Activated T-helper 1 cell treated with anti-CD3 and anti-CD28 coated beads, Interleukin-12 subunit alpha, Interleukin-12 subunit beta, Interleukin-2, Interleukin-4 antibody, amounts not matched to agents 30 ng/mL and 10 ng/mL and 1 ng/mL, durations not matched to agents 14 hours and 24 hours and 36 hours (primary cell): ENCODE measurements at regions of chr12 and their contacts with region 1.

Region 1: GRCh38 chr12:6792522-6793201 is 3.3 kb downstream of the CD4 start:
- DNase-seq: peak; percentile 40
- H3K4me3 Mint-ChIP-seq: peak overlapping the region; percentile 94
- H3K27ac Mint-ChIP-seq: peak overlapping the region; percentile 87
- H3K4me1 Mint-ChIP-seq: peaks cover 65% of the 10 kb centered on the region
- H3K27me3 Mint-ChIP-seq: no peaks in the 10 kb centered on the region

Region 2: GRCh38 chr12:6764011-6764828 is 28.4 kb before region 1 on chr12:
- intact Hi-C with region 1: loop called (anchors 1 kb)
- DNase-seq: peak; percentile 64
- H3K4me3 Mint-ChIP-seq: peak overlapping the region; percentile 79
- H3K27ac Mint-ChIP-seq: peak overlapping the region; percentile 57
- H3K4me1 Mint-ChIP-seq: peaks cover 43% of the 10 kb centered on the region
- H3K27me3 Mint-ChIP-seq: peaks cover 21% of the 10 kb centered on the region

Region 3: GRCh38 chr12:6779708-6780432 is 12.8 kb before region 1 on chr12:
- intact Hi-C with region 1: loop called (anchors 1 kb)
- DNase-seq: no peak
- H3K4me3 Mint-ChIP-seq: peak overlapping the region; percentile 57
- H3K27ac Mint-ChIP-seq: peak overlapping the region; percentile 91
- H3K4me1 Mint-ChIP-seq: peaks cover 89% of the 10 kb centered on the region
- H3K27me3 Mint-ChIP-seq: no peaks in the 10 kb centered on the region

Region 4: DNA sequence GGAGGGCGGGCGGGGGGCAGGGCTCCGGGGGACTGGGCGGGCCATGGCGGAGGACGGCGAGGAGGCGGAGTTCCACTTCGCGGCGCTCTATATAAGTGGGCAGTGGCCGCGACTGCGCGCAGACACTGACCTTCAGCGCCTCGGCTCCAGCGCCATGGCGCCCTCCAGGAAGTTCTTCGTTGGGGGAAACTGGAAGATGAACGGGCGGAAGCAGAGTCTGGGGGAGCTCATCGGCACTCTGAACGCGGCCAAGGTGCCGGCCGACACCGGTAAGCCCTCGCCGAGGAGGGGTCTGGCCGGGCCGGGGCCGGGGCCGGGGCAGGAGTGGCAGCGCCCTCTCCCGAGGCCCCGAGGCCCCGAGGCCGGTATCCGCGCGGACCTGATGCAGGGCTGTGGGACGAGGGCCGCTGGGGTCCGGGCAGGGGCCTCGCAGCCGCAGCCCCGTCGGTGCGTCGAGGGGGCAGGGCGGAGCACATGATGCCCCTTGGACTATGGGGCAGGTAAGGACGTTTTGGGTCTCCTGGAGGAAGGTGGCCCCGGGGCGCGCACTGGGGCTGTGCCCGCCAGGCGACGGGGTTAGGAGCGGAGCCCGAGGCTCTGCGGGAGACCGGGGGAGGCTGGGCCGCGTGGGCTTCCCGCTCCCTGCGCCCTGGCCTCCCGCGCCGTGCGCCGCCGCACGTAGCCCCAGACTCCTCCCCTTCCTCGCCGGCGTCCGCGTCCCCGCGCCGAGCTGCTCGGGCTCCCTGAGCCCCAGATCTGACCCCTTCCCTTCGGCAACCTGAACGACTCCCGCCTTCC is 75.0 kb after region 1 on chr12 and contains the start of gene TPI1:
- intact Hi-C with region 1: loop called (anchors 5 kb)
- DNase-seq: peak; percentile 75
- H3K4me3 Mint-ChIP-seq: peak within 1 kb of the TSS; percentile 96
- H3K27ac Mint-ChIP-seq: peak within 1 kb of the TSS; percentile 99
- H3K4me1 Mint-ChIP-seq: peaks cover 53% of the 10 kb centered on the region
- H3K27me3 Mint-ChIP-seq: no peaks in the 10 kb centered on the region
- total RNA-seq, gene TPI1: 1,427 and 1,438 TPM in 2 replicates

Region 5: DNA sequence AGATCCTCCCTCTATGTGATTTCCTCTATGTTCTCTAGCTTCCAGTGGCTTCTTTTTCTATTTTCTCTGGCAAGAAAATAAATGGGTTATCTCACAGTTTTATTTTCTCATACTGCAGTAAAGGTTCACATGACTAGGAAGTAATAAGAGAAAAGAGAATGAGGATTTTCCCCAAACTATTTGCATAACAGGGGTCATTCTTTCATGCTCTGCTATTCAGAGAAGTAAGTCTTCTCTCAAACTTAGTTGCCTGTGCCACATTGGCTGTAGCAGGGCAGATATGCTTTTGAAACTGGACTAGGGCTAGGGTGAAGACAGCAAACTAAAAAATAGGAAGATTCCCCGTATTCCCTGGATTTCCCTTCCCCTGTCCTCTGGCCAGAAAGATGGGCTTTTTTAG is 568.6 kb after region 1 on chr12:
- intact Hi-C with region 1: no loop called
- DNase-seq: no peak
- H3K4me3 Mint-ChIP-seq: no peak overlapping the region
- H3K27ac Mint-ChIP-seq: no peak overlapping the region
- H3K4me1 Mint-ChIP-seq: no peaks in the 10 kb centered on the region
- H3K27me3 Mint-ChIP-seq: no peaks in the 10 kb centered on the region